Prostate gland (tissue), 2 donors: ENCODE measurements at regions of chr9 and their contacts with region 1.

Region 1: GRCh38 chr9:83622939-83623678 is at the start of gene IDNK:
- DNase-seq: peak; percentile 35
- H3K4me3 ChIP-seq: peak within 1 kb of the TSS; percentile 84 to 89
- H3K27ac ChIP-seq: peak within 1 kb of the TSS; percentile 90 to 91
- H3K4me1 ChIP-seq: no peaks in the 10 kb centered on the region
- H3K27me3 ChIP-seq: no peaks in the 10 kb centered on the region
- CTCF ChIP-seq: no peak
- POLR2A ChIP-seq: peak; percentile 10
- total RNA-seq, gene IDNK: 8.4 to 11.1 TPM

Region 2: GRCh38 chr9:83456226-83456625 is 166.9 kb before region 1 on chr9:
- intact Hi-C with region 1: no loop called
- DNase-seq: no peak
- H3K4me3 ChIP-seq: no peak overlapping the region
- H3K27ac ChIP-seq: no peak overlapping the region
- H3K4me1 ChIP-seq: no peaks in the 10 kb centered on the region
- H3K27me3 ChIP-seq: no peaks in the 10 kb centered on the region
- CTCF ChIP-seq: no peak
- POLR2A ChIP-seq: no peak

Region 3: DNA sequence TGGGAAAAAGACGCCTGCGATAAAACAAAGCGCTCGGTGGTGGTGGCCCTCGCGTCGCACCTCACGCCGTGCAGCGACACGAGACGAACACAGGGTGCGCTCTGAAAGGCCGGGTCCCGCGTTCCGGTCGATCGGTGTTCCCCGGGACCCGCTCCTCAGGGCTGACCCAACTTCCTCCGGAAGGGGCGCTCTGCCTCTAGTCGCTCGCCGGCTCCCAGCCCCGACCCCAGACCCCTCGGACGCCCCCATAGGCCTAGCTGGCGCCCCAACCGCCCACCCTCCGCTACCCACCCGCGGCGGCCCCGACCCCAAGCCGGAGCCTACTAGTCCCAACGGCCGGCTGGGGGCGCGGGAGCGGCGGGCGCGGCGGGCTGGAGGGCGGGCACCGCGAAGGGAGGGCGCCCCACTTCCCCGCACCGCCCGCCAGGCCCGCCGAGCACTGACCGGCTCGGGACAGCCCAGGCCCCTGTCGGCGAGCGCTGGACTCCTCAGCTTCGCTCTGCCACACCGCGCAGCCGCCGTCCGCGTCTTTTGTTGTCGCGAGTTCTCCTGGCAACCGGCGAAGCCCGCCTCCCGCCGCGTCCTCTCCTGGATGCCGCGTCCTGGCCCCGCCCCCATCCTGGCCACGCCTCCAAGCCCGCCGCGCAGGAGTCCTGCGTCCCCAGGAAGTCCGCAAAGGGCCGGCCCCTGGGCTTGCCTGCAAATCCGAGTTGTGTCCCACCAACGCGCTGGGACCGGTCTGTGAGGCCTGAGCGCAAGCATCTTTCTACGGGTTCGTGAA is 298.0 kb after region 1 on chr9 and contains the start of gene KIF27:
- intact Hi-C with region 1: loop called (anchors 5 kb)
- DNase-seq: peak; percentile 98
- H3K4me3 ChIP-seq: peak within 1 kb of the TSS; percentile 89 to 95
- H3K27ac ChIP-seq: peak within 1 kb of the TSS; percentile 95 to 96
- H3K4me1 ChIP-seq: no peaks in the 10 kb centered on the region
- H3K27me3 ChIP-seq: no peaks in the 10 kb centered on the region
- CTCF ChIP-seq: peak in 3 of 4 experiments; percentile 36 to 69 (median 66)
- POLR2A ChIP-seq: peak; percentile 83
- total RNA-seq, gene KIF27: 3.4 to 11.2 TPM